Testis (tissue), 5 donors: ENCODE measurements at regions of chrX and their contacts with region 1.

Region 1: GRCh38 chrX:25004485-25005032 is 11.2 kb downstream of the ARX start:
- DNase-seq: no peak
- H3K4me3 ChIP-seq: peak overlapping the region; percentile 31 to 43
- H3K27ac ChIP-seq: peak overlapping the region; percentile 81 to 85
- H3K4me1 ChIP-seq: no peaks in the 10 kb centered on the region
- H3K27me3 ChIP-seq: no peaks in the 10 kb centered on the region
- CTCF ChIP-seq: no peak
- POLR2A ChIP-seq: no peak

Region 2: DNA sequence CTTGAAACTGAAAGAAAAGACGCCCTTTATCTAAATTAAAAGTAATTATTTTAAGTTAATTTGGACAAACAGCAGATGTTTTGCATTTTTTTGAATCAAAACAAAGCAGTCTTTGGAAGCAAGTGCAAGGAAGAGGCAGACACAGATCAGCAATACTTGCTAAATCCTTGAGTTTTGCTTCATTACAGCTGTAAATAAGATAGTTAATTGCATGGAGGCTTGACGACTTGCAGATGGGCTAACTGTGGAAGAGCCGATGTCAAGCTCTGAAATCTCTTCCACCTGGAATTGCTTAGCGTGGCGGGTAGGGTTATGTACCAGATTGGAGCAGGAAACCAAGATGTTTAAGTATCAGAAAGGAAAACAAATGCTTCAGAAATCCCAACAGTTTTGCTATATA is 162.1 kb before region 1 on chrX:
- intact Hi-C with region 1: loop called (anchors 5 kb)
- DNase-seq: peak; percentile 30
- H3K4me3 ChIP-seq: no peak overlapping the region
- H3K27ac ChIP-seq: no peak overlapping the region
- H3K4me1 ChIP-seq: no peaks in the 10 kb centered on the region
- H3K27me3 ChIP-seq: no peaks in the 10 kb centered on the region
- CTCF ChIP-seq: no peak
- POLR2A ChIP-seq: no peak

Region 3: GRCh38 chrX:24920769-24921168 is 83.8 kb before region 1 on chrX:
- intact Hi-C with region 1: no loop called
- DNase-seq: no peak
- H3K4me3 ChIP-seq: no peak overlapping the region
- H3K27ac ChIP-seq: no peak overlapping the region
- H3K4me1 ChIP-seq: no peaks in the 10 kb centered on the region
- H3K27me3 ChIP-seq: no peaks in the 10 kb centered on the region
- CTCF ChIP-seq: no peak
- POLR2A ChIP-seq: no peak

Region 4: DNA sequence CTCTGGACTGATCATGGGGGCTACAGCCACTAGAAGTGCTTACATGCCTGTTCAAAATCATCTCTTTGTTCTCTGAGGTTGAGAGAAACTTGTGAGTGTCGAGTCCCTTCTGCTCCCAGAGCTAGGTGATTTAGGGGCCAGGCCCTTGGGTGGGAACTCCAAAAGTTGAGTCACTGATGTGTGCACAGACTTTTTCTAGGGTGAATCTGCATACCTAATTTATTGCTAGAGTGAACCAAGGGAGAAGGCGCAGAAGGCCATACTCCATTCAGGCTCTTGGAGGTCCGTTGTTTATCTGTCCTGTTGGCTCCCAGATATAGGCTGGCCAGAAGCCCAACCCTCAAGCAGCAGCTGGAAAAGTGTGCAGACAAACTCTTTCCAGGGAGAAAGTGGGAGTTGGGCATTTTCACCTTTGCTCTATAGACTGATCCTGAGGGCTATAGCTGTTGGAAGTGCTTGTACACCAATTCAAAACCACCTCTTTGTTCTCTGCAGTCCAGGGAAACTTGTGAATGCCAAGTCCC is 92.0 kb after region 1 on chrX:
- intact Hi-C with region 1: no loop called
- DNase-seq: peak; percentile 18
- H3K4me3 ChIP-seq: no peak overlapping the region
- H3K27ac ChIP-seq: no peak overlapping the region
- H3K4me1 ChIP-seq: no peaks in the 10 kb centered on the region
- H3K27me3 ChIP-seq: no peaks in the 10 kb centered on the region
- CTCF ChIP-seq: no peak
- POLR2A ChIP-seq: no peak